Breast epithelium (tissue), 4 donors: ENCODE measurements at regions of chr2 and their contacts with region 1.

Region 1: DNA sequence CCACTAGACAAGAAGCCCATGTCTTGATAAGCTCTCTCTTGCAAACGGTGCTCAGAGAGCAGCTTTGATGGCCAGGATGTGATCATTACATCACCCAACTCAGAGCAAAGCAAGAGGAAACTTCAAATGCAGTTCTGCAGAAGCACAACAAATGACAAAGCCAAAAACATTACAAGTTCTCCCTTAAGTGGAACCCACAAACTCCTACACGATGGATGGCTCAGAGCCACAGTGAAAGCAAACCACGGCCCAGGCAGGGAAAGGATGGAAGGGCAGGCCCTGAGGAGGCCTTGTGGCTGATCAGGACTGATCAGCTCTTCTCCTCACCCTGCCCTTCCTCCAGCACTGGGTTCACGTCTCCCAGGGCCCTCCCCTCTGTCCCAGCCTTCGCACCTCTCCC is 326.4 kb downstream of the EIPR1 start:
- DNase-seq: no peak
- H3K4me3 ChIP-seq: no peak overlapping the region
- H3K27ac ChIP-seq: no peak overlapping the region
- H3K4me1 ChIP-seq: no peaks in the 10 kb centered on the region
- H3K27me3 ChIP-seq: no peaks in the 10 kb centered on the region
- CTCF ChIP-seq: no peak
- POLR2A ChIP-seq: no peak

Region 2: GRCh38 chr2:3094999-3095958 is 44.0 kb after region 1 on chr2:
- intact Hi-C with region 1: loop called (anchors 2 kb)
- DNase-seq: peak in 1 of 2 donors; percentile 10
- H3K4me3 ChIP-seq: no peak overlapping the region
- H3K27ac ChIP-seq: no peak overlapping the region
- H3K4me1 ChIP-seq: no peaks in the 10 kb centered on the region
- H3K27me3 ChIP-seq: peaks cover 0 to 8% of the 10 kb centered on the region in 2 donors
- CTCF ChIP-seq: no peak
- POLR2A ChIP-seq: no peak

Region 3: GRCh38 chr2:3142961-3143571 is 91.8 kb after region 1 on chr2:
- intact Hi-C with region 1: no loop called
- DNase-seq: no peak
- H3K4me3 ChIP-seq: no peak overlapping the region
- H3K27ac ChIP-seq: no peak overlapping the region
- H3K4me1 ChIP-seq: no peaks in the 10 kb centered on the region
- H3K27me3 ChIP-seq: no peaks in the 10 kb centered on the region
- CTCF ChIP-seq: no peak
- POLR2A ChIP-seq: no peak

Region 4: DNA sequence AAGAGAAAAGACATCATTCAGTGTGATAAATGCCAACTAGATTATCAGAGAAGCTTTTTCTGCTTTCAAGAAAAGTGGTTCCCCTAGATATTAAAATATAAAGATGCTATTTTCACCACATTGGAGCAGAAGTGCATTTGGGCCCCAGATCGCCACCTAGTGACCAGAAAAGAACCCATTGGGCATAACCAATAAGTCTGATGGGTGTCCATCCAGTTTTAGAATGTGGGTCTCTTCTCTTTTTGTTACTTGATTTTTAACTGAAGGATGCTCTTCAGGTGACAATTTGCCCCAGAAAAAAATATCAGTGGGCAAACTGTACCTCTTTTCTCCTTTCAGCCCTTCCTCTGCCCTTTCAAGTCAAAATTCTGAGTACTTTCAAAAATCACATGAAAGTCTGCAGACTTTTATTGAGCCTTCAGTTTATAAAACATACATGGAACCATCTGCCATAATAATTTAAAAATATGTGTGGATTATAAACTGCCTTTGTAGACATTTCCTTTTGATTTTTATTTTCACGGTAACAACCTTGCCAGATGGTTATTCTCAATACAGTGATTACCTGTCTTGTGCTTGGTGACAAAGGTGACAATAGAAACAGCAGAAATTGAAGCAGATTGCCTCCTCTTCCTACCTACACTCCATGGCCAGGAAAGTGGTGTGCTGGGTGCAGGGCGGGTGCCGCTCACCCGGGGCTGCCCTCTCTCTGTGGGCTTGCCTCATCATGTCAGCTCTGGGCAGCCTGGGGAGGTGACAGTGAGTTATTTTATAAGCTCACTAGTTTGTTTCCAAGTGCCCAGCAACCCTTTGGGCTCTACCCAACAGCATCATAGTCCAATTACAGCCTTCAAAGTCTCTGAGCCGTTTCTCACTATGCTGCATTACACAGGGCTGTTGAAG is 776.7 kb after region 1 on chr2:
- intact Hi-C with region 1: no loop called
- DNase-seq: no peak
- H3K4me3 ChIP-seq: no peak overlapping the region
- H3K27ac ChIP-seq: no peak overlapping the region
- H3K4me1 ChIP-seq: no peaks in the 10 kb centered on the region
- H3K27me3 ChIP-seq: no peaks in the 10 kb centered on the region
- CTCF ChIP-seq: peak in 1 of 3 donors; percentile 33
- POLR2A ChIP-seq: no peak